CD8-positive, alpha-beta T cell (primary cell): ENCODE measurements at regions of chr11 and their contacts with region 1.

Region 1: GRCh38 chr11:17504330-17505107 is 27.9 kb upstream of the ABCC8 start:
- DNase-seq: peak; percentile 59 to 85 (median 75)
- ATAC-seq: peak; percentile 85
- H3K4me3 ChIP-seq: no peak overlapping the region
- H3K4me3 Mint-ChIP-seq: no peak overlapping the region
- H3K27ac ChIP-seq: no peak overlapping the region
- H3K27ac Mint-ChIP-seq: no peak overlapping the region
- H3K4me1 ChIP-seq: no peaks in the 10 kb centered on the region
- H3K4me1 Mint-ChIP-seq: no peaks in the 10 kb centered on the region
- H3K27me3 ChIP-seq: no peaks in the 10 kb centered on the region
- H3K27me3 Mint-ChIP-seq: peaks cover 6% of the 10 kb centered on the region
- CTCF ChIP-seq: peak; percentile 72

Region 2: GRCh38 chr11:16935518-16936302 is 568.8 kb before region 1 on chr11:
- CTCF ChIA-PET with region 1: interaction called, 3 read pairs
- POLR2A ChIA-PET with region 1: no interaction called
- intact Hi-C with region 1: loop called (anchors 5 kb)
- DNase-seq: peak in 2 of 9 experiments; percentile 42 to 49
- ATAC-seq: no peak
- H3K4me3 ChIP-seq: no peak overlapping the region
- H3K4me3 Mint-ChIP-seq: no peak overlapping the region
- H3K27ac ChIP-seq: no peak overlapping the region
- H3K27ac Mint-ChIP-seq: no peak overlapping the region
- H3K4me1 ChIP-seq: no peaks in the 10 kb centered on the region
- H3K4me1 Mint-ChIP-seq: no peaks in the 10 kb centered on the region
- H3K27me3 ChIP-seq: no peaks in the 10 kb centered on the region
- H3K27me3 Mint-ChIP-seq: peaks cover 6% of the 10 kb centered on the region
- CTCF ChIP-seq: no peak

Region 3: DNA sequence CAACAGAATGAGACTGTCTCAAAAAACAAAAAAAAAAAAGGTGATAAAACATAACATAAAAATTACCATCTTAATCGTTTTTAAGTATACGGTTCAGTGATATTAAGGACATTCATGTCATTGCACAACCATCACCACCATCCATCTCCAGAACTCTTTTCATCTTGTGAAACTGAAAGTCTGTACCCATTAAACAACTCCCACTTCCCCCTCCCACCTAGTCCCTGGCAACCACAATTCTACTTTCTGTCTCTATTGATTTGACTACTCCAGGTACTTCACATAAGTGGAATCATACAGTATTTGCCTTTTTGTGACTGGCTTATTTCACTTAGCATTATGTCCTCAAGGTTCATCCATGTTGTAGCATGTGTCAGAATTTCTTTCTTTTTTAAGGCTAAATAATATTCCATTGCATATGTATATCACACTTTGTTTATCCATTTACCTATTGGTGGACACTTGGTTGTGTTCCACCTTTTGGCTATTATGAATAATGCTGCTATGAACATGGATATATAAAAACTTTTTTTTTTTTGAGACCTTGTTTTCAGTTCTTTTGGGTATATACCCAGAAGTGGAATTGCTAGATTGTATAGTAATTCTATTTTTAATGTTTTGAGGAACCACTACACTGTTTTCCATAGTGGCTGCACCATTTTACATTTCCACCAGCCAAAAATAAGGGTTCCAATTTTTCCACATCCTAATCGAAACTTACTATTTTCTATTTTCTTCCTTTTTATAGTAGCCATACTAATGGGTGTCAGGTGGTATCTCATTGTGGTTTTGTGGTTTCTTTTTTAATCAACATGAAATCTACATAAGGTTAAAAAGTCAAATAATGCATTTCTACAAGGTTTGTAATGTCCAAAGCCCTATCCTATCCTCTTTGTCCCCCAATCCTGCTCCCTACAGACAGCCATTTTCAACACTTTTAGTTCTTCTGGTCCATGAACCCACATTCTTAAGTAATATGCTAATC is 273.4 kb before region 1 on chr11:
- CTCF ChIA-PET with region 1: interaction called, 62 read pairs
- POLR2A ChIA-PET with region 1: no interaction called
- intact Hi-C with region 1: loop called (anchors 1 kb)
- DNase-seq: peak in 2 of 9 experiments; percentile 34 to 64
- ATAC-seq: peak; percentile 81
- H3K4me3 ChIP-seq: no peak overlapping the region
- H3K4me3 Mint-ChIP-seq: no peak overlapping the region
- H3K27ac ChIP-seq: no peak overlapping the region
- H3K27ac Mint-ChIP-seq: no peak overlapping the region
- H3K4me1 ChIP-seq: peaks cover 5% of the 10 kb centered on the region
- H3K4me1 Mint-ChIP-seq: peaks cover 13% of the 10 kb centered on the region
- H3K27me3 ChIP-seq: no peaks in the 10 kb centered on the region
- H3K27me3 Mint-ChIP-seq: no peaks in the 10 kb centered on the region
- CTCF ChIP-seq: no peak

Region 4: DNA sequence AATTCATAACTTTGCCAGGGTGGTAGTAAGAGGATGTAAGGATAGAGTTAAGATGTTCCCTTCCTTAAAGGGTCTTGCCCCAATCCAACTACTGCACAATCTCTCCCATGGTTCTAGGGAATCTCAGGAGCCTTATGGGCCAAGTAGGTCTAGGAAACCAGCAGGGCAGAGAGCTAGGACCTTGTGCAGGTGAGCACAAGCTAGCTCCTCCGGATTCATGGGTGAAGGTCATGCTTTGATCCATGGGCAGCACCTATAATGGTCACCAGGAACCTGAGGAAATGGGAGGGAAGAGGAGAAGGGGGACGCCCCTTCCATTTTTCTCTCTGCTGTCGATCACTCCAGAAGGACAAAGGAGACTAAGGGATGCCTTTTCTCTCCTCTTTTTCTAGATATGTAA is 132.9 kb before region 1 on chr11:
- CTCF ChIA-PET with region 1: no interaction called
- POLR2A ChIA-PET with region 1: no interaction called
- intact Hi-C with region 1: no loop called
- DNase-seq: no peak
- ATAC-seq: no peak
- H3K4me3 ChIP-seq: no peak overlapping the region
- H3K4me3 Mint-ChIP-seq: no peak overlapping the region
- H3K27ac ChIP-seq: no peak overlapping the region
- H3K27ac Mint-ChIP-seq: no peak overlapping the region
- H3K4me1 ChIP-seq: no peaks in the 10 kb centered on the region
- H3K4me1 Mint-ChIP-seq: no peaks in the 10 kb centered on the region
- H3K27me3 ChIP-seq: no peaks in the 10 kb centered on the region
- H3K27me3 Mint-ChIP-seq: no peaks in the 10 kb centered on the region
- CTCF ChIP-seq: no peak

Region 5: DNA sequence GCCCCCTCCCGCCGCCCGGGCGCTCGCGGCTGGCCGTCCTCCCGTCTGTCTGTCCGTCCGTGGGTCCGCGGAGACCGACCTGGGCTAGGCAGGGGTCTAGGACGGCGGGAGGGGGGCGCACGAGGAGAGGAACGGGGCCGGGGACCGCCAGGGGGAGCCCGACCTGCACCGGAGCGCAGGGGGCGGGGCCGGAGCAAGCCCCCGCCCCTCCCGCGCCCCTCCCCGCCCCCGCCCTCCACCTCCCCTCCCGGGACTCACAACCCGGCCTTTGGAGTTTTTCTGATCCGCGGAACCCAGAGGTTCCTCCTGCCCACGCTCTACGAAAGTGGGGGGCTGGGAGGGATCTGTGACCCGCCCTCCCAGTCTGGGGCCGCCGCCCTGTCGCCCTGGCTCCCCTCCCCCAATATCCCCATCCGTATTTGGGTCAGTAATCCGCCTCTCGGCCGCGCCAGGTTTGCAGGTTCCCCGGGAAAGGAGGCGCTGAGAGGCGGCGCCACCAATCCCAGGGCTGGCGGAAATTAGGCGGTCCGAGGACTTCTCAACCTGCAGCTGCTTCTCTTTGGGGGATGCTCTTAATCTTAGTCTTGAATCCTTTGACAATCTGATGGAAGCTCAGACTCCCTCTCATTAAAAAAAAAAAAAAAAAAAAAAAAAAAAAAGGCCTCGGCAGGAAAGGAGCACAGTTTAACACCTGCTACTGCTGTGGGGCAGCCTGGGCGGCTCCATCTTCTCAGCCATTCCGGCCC is 115.1 kb before region 1 on chr11:
- CTCF ChIA-PET with region 1: interaction called, 119 read pairs
- POLR2A ChIA-PET with region 1: no interaction called
- intact Hi-C with region 1: loop called (anchors 1 kb)
- DNase-seq: peak; percentile 60 to 89 (median 83)
- ATAC-seq: peak; percentile 91
- H3K4me3 ChIP-seq: peak overlapping the region; percentile 69 to 75
- H3K4me3 Mint-ChIP-seq: peak overlapping the region; percentile 85
- H3K27ac ChIP-seq: no peak overlapping the region
- H3K27ac Mint-ChIP-seq: no peak overlapping the region
- H3K4me1 ChIP-seq: peaks cover 9% of the 10 kb centered on the region
- H3K4me1 Mint-ChIP-seq: peaks cover 8% of the 10 kb centered on the region
- H3K27me3 ChIP-seq: peaks cover 0 to 2% of the 10 kb centered on the region in 2 experiments
- H3K27me3 Mint-ChIP-seq: no peaks in the 10 kb centered on the region
- CTCF ChIP-seq: peak; percentile 71

Region 6: GRCh38 chr11:17519061-17519885 is 14.8 kb after region 1 on chr11:
- CTCF ChIA-PET with region 1: interaction called, 26 read pairs
- POLR2A ChIA-PET with region 1: no interaction called
- intact Hi-C with region 1: no loop called
- DNase-seq: no peak
- ATAC-seq: no peak
- H3K4me3 ChIP-seq: no peak overlapping the region
- H3K4me3 Mint-ChIP-seq: no peak overlapping the region
- H3K27ac ChIP-seq: no peak overlapping the region
- H3K27ac Mint-ChIP-seq: no peak overlapping the region
- H3K4me1 ChIP-seq: no peaks in the 10 kb centered on the region
- H3K4me1 Mint-ChIP-seq: no peaks in the 10 kb centered on the region
- H3K27me3 ChIP-seq: no peaks in the 10 kb centered on the region
- H3K27me3 Mint-ChIP-seq: peaks cover 9% of the 10 kb centered on the region
- CTCF ChIP-seq: no peak

Region 7: DNA sequence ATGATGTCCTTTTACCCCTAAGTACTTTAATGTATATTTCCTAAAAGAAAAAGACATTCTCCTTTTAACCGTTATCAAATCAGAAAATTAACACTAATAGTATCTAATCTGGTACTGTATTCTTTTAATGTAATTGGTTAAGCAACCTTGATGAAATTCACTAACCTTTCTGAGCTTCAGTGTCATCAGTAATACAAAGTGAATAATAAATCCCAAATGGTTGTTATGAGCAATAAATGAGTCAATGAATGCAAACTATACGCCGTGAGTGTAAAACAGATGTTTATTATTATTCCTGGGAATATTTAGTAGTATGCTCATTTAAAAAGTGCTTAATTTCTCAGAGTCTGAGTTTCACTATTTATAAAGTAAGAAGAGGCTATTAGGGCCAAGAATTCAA is 1062.6 kb after region 1 on chr11:
- CTCF ChIA-PET with region 1: no interaction called
- POLR2A ChIA-PET with region 1: no interaction called
- intact Hi-C with region 1: no loop called
- DNase-seq: no peak
- ATAC-seq: no peak
- H3K4me3 ChIP-seq: no peak overlapping the region
- H3K4me3 Mint-ChIP-seq: no peak overlapping the region
- H3K27ac ChIP-seq: no peak overlapping the region
- H3K27ac Mint-ChIP-seq: no peak overlapping the region
- H3K4me1 ChIP-seq: no peaks in the 10 kb centered on the region
- H3K4me1 Mint-ChIP-seq: no peaks in the 10 kb centered on the region
- H3K27me3 ChIP-seq: no peaks in the 10 kb centered on the region
- H3K27me3 Mint-ChIP-seq: no peaks in the 10 kb centered on the region
- CTCF ChIP-seq: no peak